B cell (primary cell): ENCODE measurements at regions of chr14 and their contacts with region 1.

Region 1: DNA sequence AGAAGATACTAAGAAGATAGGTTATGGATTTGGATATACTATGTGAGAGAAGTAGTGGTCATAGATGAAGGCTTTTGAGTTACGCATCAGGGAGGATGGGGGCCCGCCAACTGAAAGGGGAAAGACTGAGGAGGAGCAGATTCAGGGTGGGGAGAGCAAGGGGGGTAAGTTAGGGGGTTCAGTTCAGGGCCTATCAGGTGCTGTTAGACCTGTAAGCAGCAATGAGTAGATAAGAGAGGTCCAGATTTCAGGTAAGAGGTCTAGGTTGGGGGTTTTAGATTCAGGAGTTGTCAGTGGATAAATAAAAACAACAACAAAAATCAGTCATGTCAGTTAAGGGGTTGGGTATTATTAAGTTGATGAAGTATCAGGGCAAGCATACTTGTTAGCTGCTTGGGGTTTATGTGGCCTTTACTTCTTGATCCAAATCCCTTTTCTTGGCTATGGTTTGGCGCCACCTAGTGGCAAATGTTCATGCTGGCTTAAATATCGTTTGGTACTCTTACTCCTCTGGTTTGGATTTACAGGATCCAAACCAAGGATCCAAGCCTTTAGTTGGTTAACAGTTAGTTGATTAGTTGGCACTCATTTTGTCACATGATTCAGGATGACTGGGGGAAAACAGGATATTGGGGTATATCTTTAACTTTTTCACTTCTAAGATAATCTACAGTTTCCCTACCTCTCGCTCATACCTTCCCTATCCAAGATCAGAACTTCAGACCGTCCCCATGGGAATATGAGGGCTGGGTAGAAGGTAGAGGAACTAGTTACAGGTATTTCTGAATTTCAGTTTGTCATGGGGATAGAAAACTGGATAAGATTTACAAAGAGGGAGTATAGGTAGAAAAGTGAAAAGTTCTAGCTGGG is 65.1 kb downstream of the PCNX1 start:
- DNase-seq: peak; percentile 87
- ATAC-seq: peak; percentile 75
- H3K4me3 ChIP-seq: no peak overlapping the region
- H3K4me3 Mint-ChIP-seq: no peak overlapping the region
- H3K27ac ChIP-seq: no peak overlapping the region
- H3K27ac Mint-ChIP-seq: no peak overlapping the region
- H3K4me1 ChIP-seq: no peaks in the 10 kb centered on the region
- H3K4me1 Mint-ChIP-seq: peaks cover 1% of the 10 kb centered on the region
- H3K27me3 ChIP-seq: no peaks in the 10 kb centered on the region
- H3K27me3 Mint-ChIP-seq: no peaks in the 10 kb centered on the region
- CTCF ChIP-seq: peak; percentile 94

Region 2: DNA sequence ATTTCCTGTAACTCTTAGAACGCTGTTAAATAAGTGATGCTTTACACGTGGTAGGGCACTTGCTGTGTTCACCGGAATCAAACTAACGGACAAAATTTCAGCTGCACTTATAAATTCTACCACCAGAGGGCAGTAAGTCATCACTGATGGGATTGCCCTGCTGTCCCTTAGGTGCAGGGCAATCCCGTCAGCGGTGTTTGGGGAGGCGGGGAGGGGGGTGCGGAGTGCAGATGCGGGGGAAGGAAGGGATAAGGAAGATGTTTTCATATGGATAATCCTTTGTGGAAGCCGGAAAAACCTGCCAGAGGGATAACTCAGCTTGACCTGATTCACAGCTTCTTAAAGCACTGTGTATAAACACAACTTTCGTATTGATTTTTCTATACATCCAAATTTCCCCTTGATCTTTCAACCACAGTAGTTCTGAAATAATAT is 1153.6 kb before region 1 on chr14:
- CTCF ChIA-PET with region 1: interaction called, 3 read pairs
- POLR2A ChIA-PET with region 1: no interaction called
- intact Hi-C with region 1: loop called (anchors 5 kb)
- DNase-seq: peak; percentile 80
- ATAC-seq: peak; percentile 70
- H3K4me3 ChIP-seq: no peak overlapping the region
- H3K4me3 Mint-ChIP-seq: no peak overlapping the region
- H3K27ac ChIP-seq: no peak overlapping the region
- H3K27ac Mint-ChIP-seq: no peak overlapping the region
- H3K4me1 ChIP-seq: peaks cover 0 to 5% of the 10 kb centered on the region in 2 donors
- H3K4me1 Mint-ChIP-seq: peaks cover 7% of the 10 kb centered on the region
- H3K27me3 ChIP-seq: peaks cover 0 to 4% (median 0%) of the 10 kb centered on the region in 4 experiments
- H3K27me3 Mint-ChIP-seq: peaks cover 19% of the 10 kb centered on the region
- CTCF ChIP-seq: peak; percentile 86

Region 3: DNA sequence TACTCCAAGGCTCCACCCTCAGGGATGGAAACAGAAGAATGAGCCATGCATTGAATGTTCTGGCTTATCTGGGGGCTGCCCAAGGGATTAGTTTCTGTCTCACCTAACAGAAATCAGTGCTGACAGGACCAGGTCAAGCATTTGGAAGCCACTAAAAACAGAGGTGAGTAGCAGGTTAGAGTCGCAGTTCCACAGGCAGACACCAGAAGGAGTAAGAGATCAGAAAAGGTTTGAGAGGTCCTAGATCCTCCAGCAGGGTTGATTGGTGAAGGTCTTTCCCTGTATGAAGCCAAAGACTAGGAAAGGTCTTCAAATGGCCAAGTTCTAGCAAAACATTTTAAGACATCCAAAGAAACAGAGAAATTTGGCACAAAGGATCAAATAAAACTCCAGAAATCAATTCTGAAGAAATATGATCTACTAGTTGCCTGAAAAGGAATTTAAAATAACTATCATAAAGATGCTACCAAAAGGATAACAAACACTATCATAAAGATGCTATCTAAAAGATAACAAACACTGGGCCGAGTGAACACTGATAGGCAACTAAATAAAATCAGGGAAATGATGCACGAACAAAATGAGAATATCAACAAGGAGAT is 350.1 kb before region 1 on chr14:
- CTCF ChIA-PET with region 1: interaction called, 5 read pairs
- POLR2A ChIA-PET with region 1: no interaction called
- intact Hi-C with region 1: loop called (anchors 1 kb)
- DNase-seq: peak; percentile 73
- ATAC-seq: peak; percentile 82
- H3K4me3 ChIP-seq: no peak overlapping the region
- H3K4me3 Mint-ChIP-seq: no peak overlapping the region
- H3K27ac ChIP-seq: no peak overlapping the region
- H3K27ac Mint-ChIP-seq: no peak overlapping the region
- H3K4me1 ChIP-seq: peaks cover 7 to 10% of the 10 kb centered on the region in 2 donors
- H3K4me1 Mint-ChIP-seq: peaks cover 22% of the 10 kb centered on the region
- H3K27me3 ChIP-seq: no peaks in the 10 kb centered on the region
- H3K27me3 Mint-ChIP-seq: no peaks in the 10 kb centered on the region
- CTCF ChIP-seq: peak; percentile 85

Region 4: GRCh38 chr14:70995211-70995610 is 22.9 kb after region 1 on chr14:
- CTCF ChIA-PET with region 1: no interaction called
- POLR2A ChIA-PET with region 1: no interaction called
- intact Hi-C with region 1: no loop called
- DNase-seq: no peak
- ATAC-seq: no peak
- H3K4me3 ChIP-seq: no peak overlapping the region
- H3K4me3 Mint-ChIP-seq: no peak overlapping the region
- H3K27ac ChIP-seq: no peak overlapping the region
- H3K27ac Mint-ChIP-seq: no peak overlapping the region
- H3K4me1 ChIP-seq: no peaks in the 10 kb centered on the region
- H3K4me1 Mint-ChIP-seq: peaks cover 2% of the 10 kb centered on the region
- H3K27me3 ChIP-seq: no peaks in the 10 kb centered on the region
- H3K27me3 Mint-ChIP-seq: no peaks in the 10 kb centered on the region
- CTCF ChIP-seq: no peak

Region 5: GRCh38 chr14:71094722-71095121 is 122.4 kb after region 1 on chr14:
- CTCF ChIA-PET with region 1: no interaction called
- POLR2A ChIA-PET with region 1: no interaction called
- intact Hi-C with region 1: no loop called
- DNase-seq: no peak
- ATAC-seq: no peak
- H3K4me3 ChIP-seq: no peak overlapping the region
- H3K4me3 Mint-ChIP-seq: no peak overlapping the region
- H3K27ac ChIP-seq: no peak overlapping the region
- H3K27ac Mint-ChIP-seq: no peak overlapping the region
- H3K4me1 ChIP-seq: no peaks in the 10 kb centered on the region
- H3K4me1 Mint-ChIP-seq: no peaks in the 10 kb centered on the region
- H3K27me3 ChIP-seq: no peaks in the 10 kb centered on the region
- H3K27me3 Mint-ChIP-seq: no peaks in the 10 kb centered on the region
- CTCF ChIP-seq: no peak

Region 6: GRCh38 chr14:71155743-71156142 is 183.4 kb after region 1 on chr14:
- CTCF ChIA-PET with region 1: no interaction called
- POLR2A ChIA-PET with region 1: no interaction called
- intact Hi-C with region 1: no loop called
- DNase-seq: no peak
- ATAC-seq: no peak
- H3K4me3 ChIP-seq: no peak overlapping the region
- H3K4me3 Mint-ChIP-seq: no peak overlapping the region
- H3K27ac ChIP-seq: no peak overlapping the region
- H3K27ac Mint-ChIP-seq: no peak overlapping the region
- H3K4me1 ChIP-seq: no peaks in the 10 kb centered on the region
- H3K4me1 Mint-ChIP-seq: no peaks in the 10 kb centered on the region
- H3K27me3 ChIP-seq: peaks cover 0 to 12% (median 0%) of the 10 kb centered on the region in 4 experiments
- H3K27me3 Mint-ChIP-seq: peaks cover 5% of the 10 kb centered on the region
- CTCF ChIP-seq: no peak

Region 7: GRCh38 chr14:71206766-71207371 is 234.5 kb after region 1 on chr14:
- CTCF ChIA-PET with region 1: no interaction called
- POLR2A ChIA-PET with region 1: no interaction called
- intact Hi-C with region 1: no loop called
- DNase-seq: no peak
- ATAC-seq: no peak
- H3K4me3 ChIP-seq: no peak overlapping the region
- H3K4me3 Mint-ChIP-seq: no peak overlapping the region
- H3K27ac ChIP-seq: no peak overlapping the region
- H3K27ac Mint-ChIP-seq: no peak overlapping the region
- H3K4me1 ChIP-seq: no peaks in the 10 kb centered on the region
- H3K4me1 Mint-ChIP-seq: no peaks in the 10 kb centered on the region
- H3K27me3 ChIP-seq: peaks cover 0 to 4% (median 0%) of the 10 kb centered on the region in 4 experiments
- H3K27me3 Mint-ChIP-seq: peaks cover 8% of the 10 kb centered on the region
- CTCF ChIP-seq: no peak